ENCODE measurements at regions of chr17 and their contacts with region 1.

Region 1: DNA sequence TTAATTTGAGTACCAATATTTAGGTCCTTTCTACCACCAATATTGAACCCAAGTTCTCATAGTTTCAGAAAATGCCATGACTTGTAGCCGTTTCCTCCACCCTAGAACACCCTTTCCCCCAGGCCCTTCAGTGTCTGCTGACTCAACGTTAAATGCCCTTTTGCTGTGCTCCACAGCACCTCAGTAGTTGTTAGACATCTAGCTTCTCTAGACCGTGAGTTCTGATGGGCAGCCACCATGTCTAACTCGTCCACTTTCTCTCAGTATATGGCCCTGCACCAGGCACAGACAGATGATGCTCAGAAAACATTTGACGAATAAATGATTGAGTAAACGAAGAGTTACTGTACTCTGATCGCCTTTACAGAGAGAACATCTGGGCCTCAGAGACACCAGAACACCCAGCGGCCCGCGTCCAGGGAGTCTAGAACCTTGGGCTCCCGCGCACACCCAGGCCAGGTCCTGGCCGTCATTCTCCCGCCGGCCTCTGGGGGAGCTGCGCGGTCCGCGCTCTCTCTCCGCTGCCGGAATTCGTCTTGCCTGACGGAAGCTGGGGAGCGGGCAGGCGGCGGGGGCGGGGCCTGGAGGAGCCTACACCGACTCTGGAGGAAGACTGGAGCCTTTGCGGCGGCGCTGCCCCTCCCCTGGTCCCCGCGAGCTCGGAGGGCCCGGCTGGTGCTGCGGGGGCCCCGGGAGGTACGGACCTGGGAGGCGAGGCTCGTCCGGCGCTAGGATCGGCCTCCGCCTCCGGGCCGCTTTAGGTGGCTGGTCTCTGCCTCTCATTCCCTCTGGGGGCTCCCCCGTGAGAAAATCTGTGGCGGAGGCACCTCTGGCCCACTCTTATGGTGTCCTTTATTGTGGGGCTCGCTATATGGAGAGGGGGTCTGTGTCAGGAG is at the start of gene NKIRAS2:
- DNase-seq: peak; percentile 90
- H3K4me3 ChIP-seq: peak within 1 kb of the TSS; percentile 90 to 98 (median 97)
- H3K4me3 Mint-ChIP-seq: peak within 1 kb of the TSS; percentile 87 to 90
- H3K27ac ChIP-seq: peak within 1 kb of the TSS; percentile 66 to 90
- H3K27ac Mint-ChIP-seq: peak within 1 kb of the TSS; percentile 85 to 96 (median 90)
- H3K4me1 ChIP-seq: peaks cover 69 to 82% of the 10 kb centered on the region in 2 donors
- H3K4me1 Mint-ChIP-seq: peaks cover 73% of the 10 kb centered on the region
- H3K27me3 ChIP-seq: no peaks in the 10 kb centered on the region
- H3K27me3 Mint-ChIP-seq: no peaks in the 10 kb centered on the region
- CTCF ChIP-seq: peak; percentile 96
- polyA plus RNA-seq, gene NKIRAS2: 51.1 to 77.1 (median 69.9) TPM

Region 2: DNA sequence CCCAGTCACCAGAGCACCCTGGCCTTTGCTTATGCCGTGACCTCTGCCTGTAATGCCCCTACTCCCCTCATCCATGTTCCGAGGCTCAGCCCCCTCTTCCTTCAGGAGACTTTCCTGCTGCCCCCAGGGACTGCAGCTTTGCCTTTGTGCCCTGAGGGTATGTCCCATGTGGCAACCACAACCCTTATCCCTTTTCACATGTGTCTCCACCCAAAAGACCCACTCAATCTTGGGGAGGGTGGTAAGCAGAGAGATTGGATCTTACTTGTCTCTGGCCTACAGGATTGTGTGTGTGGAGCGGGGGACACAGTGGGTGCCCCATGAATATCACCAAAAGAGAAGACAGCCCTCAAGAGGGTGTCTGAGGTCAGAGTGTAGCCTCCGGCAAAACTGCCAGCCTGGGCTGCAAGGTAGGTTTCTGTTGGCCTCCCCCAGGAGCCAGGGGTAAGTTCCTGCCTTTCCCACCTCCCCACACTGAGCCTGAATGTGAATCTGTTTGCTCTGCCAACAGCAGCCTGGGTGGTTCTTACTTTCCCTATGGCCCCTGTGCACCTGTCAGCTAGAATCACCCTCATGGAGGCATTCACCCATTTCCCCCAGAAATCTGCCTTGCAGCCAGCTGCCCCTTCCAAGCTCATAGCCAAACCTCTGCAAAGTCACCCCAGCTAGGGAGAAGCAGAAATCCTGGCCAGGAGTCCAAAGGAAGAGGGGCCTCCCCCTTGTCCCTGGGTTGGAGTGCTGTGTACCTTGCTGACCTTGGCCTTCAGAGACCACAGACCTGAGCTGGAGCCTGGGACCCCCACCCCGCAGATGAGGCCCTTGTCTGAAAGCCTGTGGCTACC is 42.1 kb after region 1 on chr17:
- intact Hi-C with region 1: loop called in 1 of 2 experiments (anchors 2 kb)
- DNase-seq: no peak
- H3K4me3 ChIP-seq: no peak overlapping the region
- H3K4me3 Mint-ChIP-seq: peak overlapping the region in 1 of 2 donors; percentile 21
- H3K27ac ChIP-seq: no peak overlapping the region
- H3K27ac Mint-ChIP-seq: peak overlapping the region in 2 of 7 donors; percentile 6 to 52
- H3K4me1 ChIP-seq: peaks cover 15 to 16% of the 10 kb centered on the region in 2 donors
- H3K4me1 Mint-ChIP-seq: peaks cover 27% of the 10 kb centered on the region
- H3K27me3 ChIP-seq: no peaks in the 10 kb centered on the region
- H3K27me3 Mint-ChIP-seq: peaks cover 0 to 3% (median 2%) of the 10 kb centered on the region in 3 donors
- CTCF ChIP-seq: no peak

Region 3: DNA sequence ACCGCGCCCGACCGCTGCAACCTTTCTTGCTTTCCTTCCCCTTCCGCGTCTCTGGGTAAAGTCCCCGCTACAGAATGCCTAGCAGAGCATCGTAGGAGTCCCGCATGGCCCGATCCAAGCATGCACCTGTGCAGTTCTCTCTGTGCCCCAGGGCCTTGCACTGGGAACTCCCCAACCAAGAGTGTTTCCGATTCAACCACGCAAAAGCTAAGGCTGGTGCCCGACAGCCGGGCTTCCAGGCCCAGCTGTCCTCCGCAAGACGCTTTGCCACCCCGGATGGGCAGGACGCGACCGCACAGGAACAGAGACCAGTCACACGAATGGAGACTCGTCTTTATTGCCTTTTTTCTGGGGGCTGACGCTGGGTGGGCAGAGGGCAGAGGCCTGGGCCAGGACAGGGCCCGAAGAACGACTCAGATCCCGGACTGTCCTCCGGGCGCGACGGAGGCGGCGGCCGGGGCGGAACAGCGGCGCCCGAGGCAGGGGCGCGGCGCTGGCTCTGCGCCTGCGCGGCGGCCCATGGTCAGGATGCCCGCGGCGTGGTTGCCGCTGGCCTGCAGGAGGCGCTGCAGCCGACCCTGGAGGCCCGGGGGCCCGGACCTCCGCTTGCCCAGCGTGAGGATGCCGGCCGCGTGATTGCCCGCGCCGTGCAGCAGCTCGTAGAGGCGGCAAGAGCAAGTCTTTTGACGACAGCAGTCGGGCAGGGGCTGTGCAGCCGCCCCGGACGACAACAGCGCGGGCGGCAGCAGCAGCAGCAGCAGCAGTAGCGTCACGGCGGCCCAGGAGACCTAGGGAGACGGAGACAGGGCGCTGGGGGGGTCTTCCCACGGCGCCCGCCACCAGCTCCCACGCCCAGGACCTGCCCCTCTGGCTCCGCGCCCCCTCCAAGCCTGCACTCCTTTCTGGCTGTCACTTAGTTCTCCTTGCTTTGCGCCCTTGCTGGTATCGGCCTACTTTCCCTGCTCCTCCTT is 164.3 kb after region 1 on chr17:
- intact Hi-C with region 1: loop called in 1 of 2 experiments (anchors 10 kb)
- DNase-seq: peak; percentile 76 to 81 (median 80)
- H3K4me3 ChIP-seq: peak overlapping the region; percentile 41 to 89 (median 68)
- H3K4me3 Mint-ChIP-seq: peak overlapping the region; percentile 87 to 95
- H3K27ac ChIP-seq: peak overlapping the region; percentile 74 to 88
- H3K27ac Mint-ChIP-seq: peak overlapping the region; percentile 86 to 93 (median 92)
- H3K4me1 ChIP-seq: peaks cover 74 to 85% of the 10 kb centered on the region in 2 donors
- H3K4me1 Mint-ChIP-seq: peaks cover 75% of the 10 kb centered on the region
- H3K27me3 ChIP-seq: peaks cover 8 to 26% of the 10 kb centered on the region in 2 donors
- H3K27me3 Mint-ChIP-seq: peaks cover 23 to 29% (median 26%) of the 10 kb centered on the region in 3 donors
- CTCF ChIP-seq: peak; percentile 96

Measured in CD14-positive monocyte (primary cell).